ENCODE measurements at regions of chr19 and their contacts with region 1.

Region 1: GRCh38 chr19:54209811-54210494 is 9.3 kb downstream of the RPS9 start:
- DNase-seq: peak; percentile 91 to 97 (median 94)
- H3K4me3 ChIP-seq: no peak overlapping the region
- H3K27ac ChIP-seq: peak overlapping the region; percentile 57 to 82
- H3K4me1 ChIP-seq: peaks cover 36% of the 10 kb centered on the region
- H3K27me3 ChIP-seq: no peaks in the 10 kb centered on the region
- CTCF ChIP-seq: no peak
- EP300 ChIP-seq: no peak
- POLR2A ChIP-seq: no peak

Region 2: DNA sequence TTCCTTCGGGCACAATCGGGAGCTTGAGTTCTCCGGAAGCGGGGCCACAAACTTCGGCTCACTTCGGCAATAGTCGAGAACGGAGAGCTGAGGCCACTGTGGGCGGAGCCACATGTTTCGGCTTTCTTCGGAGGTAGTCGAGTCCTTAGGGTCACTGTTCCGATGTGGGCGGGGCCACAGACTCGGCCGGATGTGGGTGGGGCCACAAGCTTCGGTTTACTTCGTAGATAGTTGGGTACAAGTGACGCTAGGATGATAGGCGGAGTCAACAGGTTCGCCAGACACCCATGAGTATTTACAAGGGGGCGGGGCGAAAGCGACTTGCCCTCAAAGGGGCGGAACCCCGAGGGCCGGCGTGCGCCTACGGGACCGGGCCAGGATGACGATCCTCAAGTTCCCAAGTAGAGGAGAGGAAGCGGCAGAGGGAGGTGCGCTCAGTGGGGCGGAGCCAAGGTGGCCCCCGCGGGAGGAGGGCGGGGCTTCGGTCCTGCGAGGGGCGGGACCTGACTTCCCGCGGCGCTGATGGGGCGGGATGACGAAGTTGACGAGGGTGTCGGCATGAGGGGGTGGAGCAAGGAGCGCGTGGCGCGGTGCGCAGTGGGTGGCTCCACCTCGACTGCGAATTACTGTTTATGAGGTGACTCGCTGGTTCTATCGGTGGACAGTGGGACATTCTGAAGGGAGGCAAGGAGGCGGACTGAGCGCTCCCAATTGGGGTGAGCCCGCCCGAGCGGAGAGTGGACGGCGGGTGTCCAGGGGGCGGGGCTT is 20.0 kb before region 1 on chr19:
- intact Hi-C with region 1: loop called in 1 of 4 experiments (anchors 1 kb)
- DNase-seq: peak; percentile 100
- H3K4me3 ChIP-seq: peak overlapping the region; percentile 80
- H3K27ac ChIP-seq: peak overlapping the region; percentile 96 to 100
- H3K4me1 ChIP-seq: peaks cover 6% of the 10 kb centered on the region
- H3K27me3 ChIP-seq: no peaks in the 10 kb centered on the region
- CTCF ChIP-seq: peak in 1 of 3 donors; percentile 4
- EP300 ChIP-seq: peak; percentile 43
- POLR2A ChIP-seq: peak; percentile 95

Region 3: DNA sequence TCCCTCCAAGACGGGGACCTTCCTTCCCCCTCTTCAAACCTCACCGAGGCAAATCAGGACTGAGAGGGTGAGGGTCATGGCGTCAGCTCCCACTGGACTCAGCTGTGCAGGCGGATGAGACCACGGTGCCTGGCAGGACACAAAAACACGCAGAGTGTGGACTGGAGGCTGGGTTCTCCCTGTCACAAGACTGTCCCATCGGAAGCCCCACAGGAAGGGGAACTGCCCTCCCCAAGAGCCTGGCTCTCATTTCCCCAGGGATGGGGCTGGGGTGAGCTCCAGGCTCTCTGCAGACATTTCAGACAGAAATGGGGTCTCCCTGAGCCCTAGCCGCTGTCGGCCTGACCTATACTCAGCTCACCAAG is 47.1 kb after region 1 on chr19 and contains the start of gene LILRB5:
- intact Hi-C with region 1: no loop called
- DNase-seq: no peak
- H3K4me3 ChIP-seq: no peak within 1 kb of the TSS
- H3K27ac ChIP-seq: no peak within 1 kb of the TSS
- H3K4me1 ChIP-seq: no peaks in the 10 kb centered on the region
- H3K27me3 ChIP-seq: no peaks in the 10 kb centered on the region
- CTCF ChIP-seq: no peak
- EP300 ChIP-seq: no peak
- POLR2A ChIP-seq: no peak
- total RNA-seq, gene LILRB5: 2.0 to 9.1 (median 3.1) TPM

Region 4: DNA sequence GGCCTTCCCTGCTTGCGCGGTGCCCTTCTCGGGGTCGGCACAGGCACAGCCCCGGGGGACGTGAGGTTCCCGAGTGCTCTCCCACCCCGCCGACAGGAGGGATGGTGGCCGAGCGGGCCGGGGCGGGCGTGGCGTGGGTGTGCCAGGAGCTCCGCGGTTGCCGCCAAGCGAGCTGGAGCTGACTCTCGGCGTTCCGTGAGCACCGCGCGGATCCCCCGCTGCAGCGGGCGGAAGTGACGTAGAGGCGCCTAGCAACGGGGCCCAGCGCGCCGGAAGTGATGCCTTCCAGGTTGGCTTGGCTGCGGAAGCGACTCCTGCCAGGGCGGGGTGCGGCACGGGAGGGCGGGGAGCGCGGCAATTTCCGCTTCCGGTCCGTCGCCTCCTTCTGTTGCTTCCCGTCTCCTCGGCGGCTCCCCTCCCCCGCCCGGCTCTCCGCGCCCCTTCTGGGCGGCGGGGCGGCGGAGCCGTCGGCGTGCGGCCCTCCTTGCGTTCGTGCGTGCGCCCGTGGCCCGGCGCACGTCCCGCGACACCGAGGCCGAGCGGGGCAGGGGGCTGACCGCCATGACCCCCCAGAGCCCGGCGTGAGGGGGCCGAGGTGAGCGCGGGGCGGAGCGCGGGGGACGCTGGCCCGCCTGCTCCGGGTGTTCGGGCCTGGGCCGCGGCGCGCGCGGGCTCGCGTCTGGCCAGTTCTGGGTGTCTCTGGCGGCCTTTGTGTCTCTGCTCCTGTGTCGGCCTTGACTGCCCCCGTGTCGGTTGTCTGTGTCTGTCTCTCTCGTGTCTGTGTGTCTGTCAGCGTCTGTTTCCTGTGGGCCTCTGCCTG is 1465.1 kb after region 1 on chr19 and contains the start of gene EPN1:
- intact Hi-C with region 1: loop called in 1 of 4 experiments (anchors 10 kb)
- DNase-seq: peak; percentile 97 to 98 (median 97)
- H3K4me3 ChIP-seq: peak within 1 kb of the TSS; percentile 71
- H3K27ac ChIP-seq: peak within 1 kb of the TSS; percentile 69 to 83
- H3K4me1 ChIP-seq: peaks cover 12% of the 10 kb centered on the region
- H3K27me3 ChIP-seq: no peaks in the 10 kb centered on the region
- CTCF ChIP-seq: no peak
- EP300 ChIP-seq: no peak
- POLR2A ChIP-seq: peak; percentile 51
- total RNA-seq, gene EPN1: 53.4 to 187 (median 142) TPM

Measured in ovary (tissue), 10 donors.